OCI-LY7 (cell line): ENCODE measurements at regions of chr7 and their contacts with region 1.

Region 1: GRCh38 chr7:322111-322671 is 32.2 kb downstream of the FOXL3 start:
- DNase-seq: peak; percentile 63
- H3K4me3 ChIP-seq: no peak overlapping the region
- H3K27ac ChIP-seq: no peak overlapping the region
- H3K4me1 ChIP-seq: no peaks in the 10 kb centered on the region
- CTCF ChIP-seq: peak; percentile 75

Region 2: GRCh38 chr7:405489-406211 is 83.5 kb after region 1 on chr7:
- CTCF ChIA-PET with region 1: no interaction called
- POLR2A ChIA-PET with region 1: no interaction called
- intact Hi-C with region 1: no loop called
- DNase-seq: no peak
- H3K4me3 ChIP-seq: no peak overlapping the region
- H3K27ac ChIP-seq: no peak overlapping the region
- H3K4me1 ChIP-seq: no peaks in the 10 kb centered on the region
- CTCF ChIP-seq: no peak

Region 3: DNA sequence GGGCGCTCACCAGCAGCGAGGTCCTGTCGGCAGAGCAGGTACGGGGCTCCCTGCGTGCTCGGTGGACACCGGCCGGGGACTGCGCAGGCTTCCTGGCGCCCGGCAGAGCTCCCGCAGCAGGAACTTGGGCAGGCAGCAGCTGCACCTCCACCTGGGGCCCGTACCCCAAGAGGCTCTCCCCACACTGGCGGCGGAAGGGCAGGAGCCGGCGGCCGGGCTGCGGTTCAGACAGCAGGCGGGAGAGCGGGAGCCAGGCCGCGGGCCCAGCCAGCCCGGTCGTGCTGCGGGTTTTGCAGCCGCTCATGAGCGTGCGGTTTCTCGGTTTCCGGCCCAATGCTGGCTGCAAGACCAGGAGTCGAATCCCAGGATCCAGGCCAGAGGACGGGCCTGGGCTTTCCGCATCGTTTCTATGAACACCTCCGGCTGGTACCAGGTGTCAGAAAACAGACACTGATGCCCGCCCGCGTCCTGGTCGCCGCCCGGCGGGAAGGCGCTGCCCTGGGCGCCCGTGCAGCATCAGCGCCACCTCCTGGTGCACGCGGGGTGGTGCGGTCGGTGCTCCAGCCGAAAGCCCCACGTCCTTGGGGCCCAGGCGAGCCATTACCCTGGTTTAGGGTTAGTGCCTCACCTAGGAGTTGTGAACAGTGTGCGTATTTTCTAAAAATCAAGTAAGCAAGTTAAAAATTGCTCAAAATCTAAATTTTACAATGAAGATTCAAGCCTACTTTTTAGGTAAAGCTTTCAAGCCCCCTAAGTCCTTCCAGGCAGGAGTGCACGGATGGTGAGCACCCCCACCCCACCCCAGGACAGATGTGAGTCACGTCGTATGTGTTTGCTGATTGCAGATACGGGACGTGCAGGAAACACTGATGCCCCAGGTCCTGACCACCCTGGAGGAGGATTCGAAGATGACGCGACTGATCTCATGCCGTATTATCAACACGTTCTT is 452.2 kb after region 1 on chr7:
- CTCF ChIA-PET with region 1: no interaction called
- POLR2A ChIA-PET with region 1: no interaction called
- intact Hi-C with region 1: loop called (anchors 5 kb)
- DNase-seq: peak; percentile 48
- H3K4me3 ChIP-seq: no peak overlapping the region
- H3K27ac ChIP-seq: no peak overlapping the region
- H3K4me1 ChIP-seq: no peaks in the 10 kb centered on the region
- CTCF ChIP-seq: peak; percentile 91